Dorsolateral prefrontal cortex (tissue), 120 donors: ENCODE measurements at regions of chr2 and their contacts with region 1.

Region 1: GRCh38 chr2:116510158-116510557 is 1304.3 kb upstream of the DDX18 start:
- DNase-seq: no peak
- H3K4me3 ChIP-seq: no peak overlapping the region
- H3K27ac ChIP-seq: no peak overlapping the region
- H3K27me3 ChIP-seq: no peaks in the 10 kb centered on the region
- CTCF ChIP-seq: peak in 53 of 56 donors; percentile 14 to 66 (median 45)

Region 2: DNA sequence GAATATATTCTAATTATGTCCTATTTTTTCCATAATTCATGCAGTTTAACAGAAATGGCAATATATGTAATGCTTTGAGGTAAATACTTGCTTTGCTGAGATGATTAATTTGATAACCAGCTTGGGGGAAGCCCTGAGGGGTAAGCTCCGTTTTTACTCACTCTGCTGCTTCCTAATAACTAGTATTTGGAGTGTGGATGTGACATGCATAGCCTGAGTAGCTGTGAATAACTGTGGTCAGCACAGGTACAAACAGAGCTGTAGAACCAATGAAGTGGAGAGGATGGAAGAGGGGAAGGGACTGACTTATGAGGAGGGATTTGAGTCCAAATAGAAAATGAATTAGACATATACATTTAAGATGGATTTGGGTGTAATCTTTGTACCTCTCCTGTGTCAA is 191.2 kb before region 1 on chr2:
- intact Hi-C with region 1: no loop called
- DNase-seq: no peak
- H3K4me3 ChIP-seq: no peak overlapping the region
- H3K27ac ChIP-seq: no peak overlapping the region
- H3K27me3 ChIP-seq: no peaks in the 10 kb centered on the region
- CTCF ChIP-seq: no peak

Region 3: DNA sequence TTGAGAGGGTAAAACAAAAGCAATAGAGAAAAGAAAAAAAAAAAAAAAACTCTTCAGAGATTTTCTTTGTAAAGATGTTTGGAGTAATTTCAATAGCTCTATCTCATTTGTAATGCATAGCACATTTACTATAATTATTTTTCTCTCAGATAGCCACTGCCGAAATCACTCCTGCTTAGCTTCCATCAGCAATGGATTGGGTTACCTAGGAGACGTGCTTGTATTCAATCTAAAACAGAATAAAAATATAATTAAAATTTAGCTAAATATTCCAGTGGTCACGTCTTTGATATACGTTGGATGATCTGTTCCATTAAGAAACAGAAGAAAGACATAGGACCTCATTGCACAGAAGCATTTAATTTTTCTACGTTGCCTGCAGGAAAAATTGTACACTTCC is 131.4 kb before region 1 on chr2:
- intact Hi-C with region 1: no loop called
- DNase-seq: no peak
- H3K4me3 ChIP-seq: no peak overlapping the region
- H3K27ac ChIP-seq: no peak overlapping the region
- H3K27me3 ChIP-seq: no peaks in the 10 kb centered on the region
- CTCF ChIP-seq: no peak

Region 4: DNA sequence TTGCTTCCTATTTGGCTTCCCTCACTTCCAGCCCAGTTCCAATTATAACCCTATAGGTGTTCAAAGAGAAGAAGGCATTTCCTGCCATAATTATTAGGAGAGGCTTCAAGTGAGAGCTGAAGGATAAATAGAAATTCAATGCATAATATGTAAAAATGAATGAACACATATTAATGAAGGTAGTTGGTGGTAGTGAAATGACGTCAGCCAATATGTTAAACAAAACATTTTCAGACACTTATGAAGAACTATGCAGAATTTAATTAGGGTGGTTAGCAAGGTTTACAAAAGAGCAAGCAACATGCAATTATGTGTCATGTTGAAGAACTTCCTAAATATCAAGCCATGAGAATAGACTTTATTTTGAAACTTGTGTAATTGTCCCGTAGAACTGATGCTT is 445.5 kb after region 1 on chr2:
- intact Hi-C with region 1: loop called in 1 of 2 experiments (anchors 2 kb)
- DNase-seq: no peak
- H3K4me3 ChIP-seq: no peak overlapping the region
- H3K27ac ChIP-seq: no peak overlapping the region
- H3K27me3 ChIP-seq: peaks cover 0 to 3% (median 0%) of the 10 kb centered on the region in 45 donors
- CTCF ChIP-seq: no peak